ENCODE measurements at regions of chr12 and their contacts with region 1.

Region 1: GRCh38 chr12:54279866-54280467 is at the start of gene CBX5:
- DNase-seq: peak; percentile 97 to 100 (median 100)
- ATAC-seq: peak; percentile 48 to 52
- H3K4me3 Mint-ChIP-seq: no peak within 1 kb of the TSS
- H3K27ac Mint-ChIP-seq: no peak within 1 kb of the TSS
- H3K4me1 Mint-ChIP-seq: peaks cover 26 to 68% (median 48%) of the 10 kb centered on the region in 4 donors
- H3K27me3 Mint-ChIP-seq: no peaks in the 10 kb centered on the region
- polyA plus RNA-seq, gene CBX5: 23.7 to 34.4 (median 29.4) TPM

Region 2: DNA sequence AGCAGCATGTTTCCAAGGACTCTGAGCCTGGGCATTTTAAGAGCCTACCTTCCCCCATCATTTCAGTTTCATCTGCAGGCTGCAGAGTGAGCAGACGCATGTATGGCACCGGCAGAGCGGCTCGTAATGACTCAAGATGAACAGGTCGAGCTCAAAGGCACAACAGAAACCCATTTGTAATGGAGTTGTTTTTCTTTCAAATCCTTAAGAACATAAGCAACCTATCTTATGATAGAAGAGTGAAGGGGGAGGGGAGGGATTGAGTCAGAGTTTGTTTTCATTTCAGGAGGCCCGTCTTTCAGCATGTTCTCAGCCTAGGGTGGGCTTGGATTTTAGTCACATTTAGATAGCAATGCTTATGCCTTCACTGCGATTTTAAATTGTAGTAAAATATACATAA is 473.2 kb before region 1 on chr12:
- POLR2A ChIA-PET with region 1: no interaction called
- DNase-seq: no peak
- ATAC-seq: no peak
- H3K4me3 Mint-ChIP-seq: no peak overlapping the region
- H3K27ac Mint-ChIP-seq: no peak overlapping the region
- H3K4me1 Mint-ChIP-seq: no peaks in the 10 kb centered on the region
- H3K27me3 Mint-ChIP-seq: peaks cover 25 to 43% (median 35%) of the 10 kb centered on the region in 5 donors

Region 3: DNA sequence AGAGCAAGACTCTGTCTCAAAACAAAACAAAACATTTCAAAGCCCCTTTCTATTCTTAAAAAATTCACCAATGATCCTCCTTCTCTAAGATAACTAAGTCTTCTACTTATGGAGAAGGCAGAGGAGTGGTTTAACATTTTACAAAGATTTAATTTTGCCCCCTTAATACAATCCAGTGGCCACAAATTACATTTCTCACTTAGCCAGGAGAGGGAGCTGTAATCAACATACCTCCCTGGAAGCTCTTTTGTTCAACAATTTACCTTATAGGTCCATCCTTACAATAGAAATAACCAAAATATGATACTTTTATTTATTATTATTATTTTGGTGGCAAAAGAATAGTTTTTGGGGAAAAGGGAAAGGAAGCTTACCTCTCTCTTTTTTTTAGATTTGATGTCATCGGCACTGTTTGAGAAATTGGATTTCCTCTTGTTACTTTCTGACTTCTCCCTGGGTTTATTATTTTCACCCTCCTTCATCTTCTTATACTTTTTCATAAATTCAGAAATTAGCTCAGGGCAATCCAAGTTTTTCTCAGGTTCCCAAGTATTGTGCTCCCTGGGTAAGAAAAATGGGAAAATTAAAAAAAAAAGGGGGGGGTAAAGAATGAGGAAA is 28.2 kb before region 1 on chr12:
- POLR2A ChIA-PET with region 1: interaction called, 24 read pairs
- DNase-seq: peak in 5 of 10 donors; percentile 22 to 61 (median 44)
- ATAC-seq: peak; percentile 67 to 76
- H3K4me3 Mint-ChIP-seq: no peak overlapping the region
- H3K27ac Mint-ChIP-seq: no peak overlapping the region
- H3K4me1 Mint-ChIP-seq: peaks cover 7 to 17% (median 8%) of the 10 kb centered on the region in 4 donors
- H3K27me3 Mint-ChIP-seq: no peaks in the 10 kb centered on the region

Region 4: GRCh38 chr12:54294152-54294952 is 14.4 kb after region 1 on chr12:
- POLR2A ChIA-PET with region 1: interaction called, 38 read pairs
- DNase-seq: peak; percentile 16 to 79 (median 41)
- ATAC-seq: peak; percentile 69 to 70
- H3K4me3 Mint-ChIP-seq: no peak overlapping the region
- H3K27ac Mint-ChIP-seq: peak overlapping the region in 1 of 10 donors; percentile 30
- H3K4me1 Mint-ChIP-seq: peaks cover 2 to 23% (median 5%) of the 10 kb centered on the region in 4 donors
- H3K27me3 Mint-ChIP-seq: peaks cover 5 to 17% (median 11%) of the 10 kb centered on the region in 5 donors

Region 5: GRCh38 chr12:54337280-54337842 is 57.4 kb after region 1 on chr12:
- POLR2A ChIA-PET with region 1: no interaction called
- DNase-seq: no peak
- ATAC-seq: no peak
- H3K4me3 Mint-ChIP-seq: no peak overlapping the region
- H3K27ac Mint-ChIP-seq: peak overlapping the region in 1 of 10 donors; percentile 74
- H3K4me1 Mint-ChIP-seq: peaks cover 9 to 42% (median 35%) of the 10 kb centered on the region in 4 donors
- H3K27me3 Mint-ChIP-seq: no peaks in the 10 kb centered on the region

Region 6: DNA sequence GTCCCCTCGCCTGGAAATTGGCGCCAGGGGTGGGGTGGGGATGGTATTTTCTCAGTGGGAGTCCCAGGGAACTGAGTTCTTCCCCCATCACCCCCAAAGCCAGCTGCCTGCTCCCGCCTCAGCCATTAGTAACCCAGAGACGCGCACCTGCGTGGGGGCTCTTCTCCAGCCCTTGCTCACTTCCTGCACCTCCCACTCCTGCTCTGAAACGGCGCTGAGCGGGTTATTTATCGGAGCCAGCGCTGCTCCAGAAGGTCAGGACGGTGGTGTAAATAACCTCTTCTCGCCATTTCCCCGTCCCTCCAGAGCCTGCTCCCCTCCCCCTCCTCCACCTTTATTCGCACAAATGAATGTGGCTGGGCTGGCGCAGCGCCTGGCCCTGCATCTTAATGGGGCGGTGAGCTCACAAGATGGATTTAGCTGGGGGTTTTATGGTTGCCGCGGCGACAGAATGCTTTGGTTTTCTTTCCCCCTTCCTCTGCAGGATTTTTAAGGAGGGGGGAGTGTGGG is 72.1 kb after region 1 on chr12:
- POLR2A ChIA-PET with region 1: interaction called, 14 read pairs
- DNase-seq: peak in 6 of 10 donors; percentile 12 to 67 (median 32)
- ATAC-seq: peak; percentile 85 to 92
- H3K4me3 Mint-ChIP-seq: peak overlapping the region; percentile 79 to 91 (median 84)
- H3K27ac Mint-ChIP-seq: peak overlapping the region; percentile 37 to 95 (median 88)
- H3K4me1 Mint-ChIP-seq: peaks cover 12 to 24% (median 17%) of the 10 kb centered on the region in 4 donors
- H3K27me3 Mint-ChIP-seq: no peaks in the 10 kb centered on the region

Region 7: GRCh38 chr12:54411391-54412241 is 131.6 kb after region 1 on chr12:
- POLR2A ChIA-PET with region 1: interaction called, 14 read pairs
- DNase-seq: peak; percentile 35 to 73 (median 46)
- ATAC-seq: peak; percentile 21 to 26
- H3K4me3 Mint-ChIP-seq: peak overlapping the region; percentile 52 to 91 (median 78)
- H3K27ac Mint-ChIP-seq: peak overlapping the region; percentile 95 to 100 (median 98)
- H3K4me1 Mint-ChIP-seq: peaks cover 32 to 88% (median 80%) of the 10 kb centered on the region in 4 donors
- H3K27me3 Mint-ChIP-seq: no peaks in the 10 kb centered on the region

Measured in naive thymus-derived CD8-positive, alpha-beta T cell (primary cell).